SK-N-SH (cell line): ENCODE measurements at regions of chr1 and their contacts with region 1.

Region 1: DNA sequence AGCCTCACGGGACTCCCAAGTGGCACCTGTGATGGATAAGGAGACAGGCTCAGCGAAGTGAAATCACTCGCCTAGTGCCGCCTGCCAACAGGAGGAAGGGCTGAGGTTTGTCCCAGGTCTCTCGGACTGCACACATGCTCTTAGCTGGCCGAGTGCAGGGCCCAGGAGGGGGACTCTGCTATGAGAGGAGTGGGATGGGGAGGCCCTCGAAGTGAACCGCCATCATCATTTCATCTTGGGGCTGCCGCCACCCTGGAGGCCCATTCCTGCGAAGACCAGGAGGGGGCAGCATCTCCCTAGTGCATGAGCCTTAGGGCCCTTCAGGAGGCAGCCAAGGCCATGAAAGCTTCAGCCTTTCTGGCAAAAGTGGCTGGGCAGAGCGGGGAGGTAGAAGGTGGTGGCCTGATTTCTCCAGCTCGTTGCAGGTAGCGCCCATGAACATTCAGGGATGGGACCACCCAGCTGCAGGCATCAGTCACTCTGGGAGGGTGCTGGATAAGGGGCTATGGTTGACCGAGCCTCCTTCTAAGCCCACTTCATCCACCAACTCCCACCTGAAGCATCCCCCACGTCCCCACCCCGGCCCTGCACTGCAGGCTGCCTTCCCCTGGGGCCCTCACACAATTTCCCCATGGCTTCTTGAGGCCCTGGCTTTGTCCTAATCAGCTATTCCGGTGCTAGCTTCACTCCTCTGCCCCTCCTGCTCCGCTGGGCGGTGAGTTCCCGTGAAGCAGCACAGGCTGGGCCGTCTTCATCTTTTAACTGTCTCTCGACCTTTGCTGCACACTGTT is 17.2 kb upstream of the RASSF5 start:
- DNase-seq: peak; percentile 87
- H3K4me3 ChIP-seq: peak overlapping the region in 1 of 2 experiments; percentile 31; a peak in 1 of 4 replicates
- H3K27ac ChIP-seq: peak overlapping the region in 1 of 2 experiments; percentile 11; a peak in 1 of 4 replicates
- H3K4me1 ChIP-seq: peaks cover 3 to 20% of the 10 kb centered on the region in 2 experiments; a peak in 2 of 4 replicates
- H3K27me3 ChIP-seq: no peaks in the 10 kb centered on the region
- CTCF ChIP-seq: peak; percentile 96
- EP300 ChIP-seq: no peak
- RAD21 ChIP-seq: peak; percentile 94

Region 2: GRCh38 chr1:206143537-206144172 is 346.5 kb before region 1 on chr1:
- CTCF ChIA-PET with region 1: no interaction called
- POLR2A ChIA-PET with region 1: no interaction called
- DNase-seq: no peak
- H3K4me3 ChIP-seq: no peak overlapping the region
- H3K27ac ChIP-seq: no peak overlapping the region
- H3K4me1 ChIP-seq: no peaks in the 10 kb centered on the region
- H3K27me3 ChIP-seq: peaks cover 44% of the 10 kb centered on the region
- CTCF ChIP-seq: no peak
- EP300 ChIP-seq: no peak
- RAD21 ChIP-seq: no peak

Region 3: DNA sequence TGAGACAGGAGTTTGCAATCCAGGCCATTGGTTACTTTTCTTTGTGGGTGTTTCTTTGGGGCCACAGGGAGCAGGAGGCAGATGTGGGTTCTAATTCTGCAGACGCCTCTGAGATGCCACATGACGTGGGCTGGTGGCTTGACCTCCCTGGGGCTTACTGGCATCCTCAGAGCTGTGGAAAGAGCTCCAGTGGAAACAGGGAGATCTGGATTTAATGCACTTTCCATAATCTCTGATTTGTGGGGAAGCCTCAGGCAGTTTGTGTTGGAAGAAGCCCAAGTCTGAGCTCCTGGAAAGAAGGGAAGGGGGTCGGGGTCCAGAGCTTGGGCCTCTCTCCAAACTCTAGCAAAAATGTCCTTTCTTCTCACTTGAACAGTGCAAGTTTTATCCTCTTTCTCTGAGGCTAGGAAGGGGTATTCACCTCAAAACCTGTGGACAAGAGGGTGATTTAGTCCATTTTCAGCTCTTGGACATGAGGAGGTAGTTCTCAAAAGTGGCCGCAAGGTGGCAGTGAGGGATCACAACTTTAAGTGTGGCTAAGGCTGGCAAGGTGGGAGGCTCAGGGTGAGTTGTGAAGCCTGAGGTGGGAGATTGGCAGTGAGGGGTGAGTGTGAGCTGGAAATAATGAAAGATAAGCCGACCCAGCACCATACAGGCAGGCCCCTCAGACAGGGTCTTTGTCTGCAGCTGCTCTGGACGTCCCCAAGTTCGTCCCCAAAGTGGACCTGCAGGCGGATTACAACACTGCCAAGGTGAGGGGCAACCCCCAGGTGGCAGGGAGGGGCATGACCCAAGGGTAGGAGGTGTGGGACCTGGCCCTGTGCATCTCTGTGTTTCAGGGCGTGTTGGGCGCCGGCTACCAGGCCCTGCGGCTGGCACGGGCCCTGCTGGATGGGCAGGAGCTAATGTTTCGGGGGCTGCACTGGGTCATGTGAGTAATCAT is 10.7 kb before region 1 on chr1:
- CTCF ChIA-PET with region 1: interaction called, 103 read pairs
- POLR2A ChIA-PET with region 1: no interaction called
- DNase-seq: peak; percentile 89
- H3K4me3 ChIP-seq: no peak overlapping the region
- H3K27ac ChIP-seq: no peak overlapping the region
- H3K4me1 ChIP-seq: peaks cover 12% of the 10 kb centered on the region in 2 experiments; a peak in 3 of 4 replicates
- H3K27me3 ChIP-seq: no peaks in the 10 kb centered on the region
- CTCF ChIP-seq: peak; percentile 80
- EP300 ChIP-seq: no peak
- RAD21 ChIP-seq: peak; percentile 85

Region 4: GRCh38 chr1:206537141-206537540 is 47.0 kb after region 1 on chr1:
- CTCF ChIA-PET with region 1: interaction called, 18 read pairs
- POLR2A ChIA-PET with region 1: no interaction called
- DNase-seq: no peak
- H3K4me3 ChIP-seq: no peak overlapping the region
- H3K27ac ChIP-seq: no peak overlapping the region
- H3K4me1 ChIP-seq: peaks cover 0 to 11% of the 10 kb centered on the region in 2 experiments; a peak in 1 of 4 replicates
- H3K27me3 ChIP-seq: no peaks in the 10 kb centered on the region
- CTCF ChIP-seq: no peak
- EP300 ChIP-seq: no peak
- RAD21 ChIP-seq: no peak

Region 5: GRCh38 chr1:206556750-206557635 is 66.8 kb after region 1 on chr1:
- CTCF ChIA-PET with region 1: interaction called, 21 read pairs
- POLR2A ChIA-PET with region 1: no interaction called
- DNase-seq: peak; percentile 87
- H3K4me3 ChIP-seq: peak overlapping the region; percentile 61 to 69
- H3K27ac ChIP-seq: no peak overlapping the region
- H3K4me1 ChIP-seq: peaks cover 0 to 10% of the 10 kb centered on the region in 2 experiments; a peak in 2 of 4 replicates
- H3K27me3 ChIP-seq: no peaks in the 10 kb centered on the region; the same call in 1 of the 2 replicates
- CTCF ChIP-seq: no peak
- EP300 ChIP-seq: peak in 1 of 2 experiments; percentile 11; a peak in 1 of 4 replicates
- RAD21 ChIP-seq: no peak

Region 6: DNA sequence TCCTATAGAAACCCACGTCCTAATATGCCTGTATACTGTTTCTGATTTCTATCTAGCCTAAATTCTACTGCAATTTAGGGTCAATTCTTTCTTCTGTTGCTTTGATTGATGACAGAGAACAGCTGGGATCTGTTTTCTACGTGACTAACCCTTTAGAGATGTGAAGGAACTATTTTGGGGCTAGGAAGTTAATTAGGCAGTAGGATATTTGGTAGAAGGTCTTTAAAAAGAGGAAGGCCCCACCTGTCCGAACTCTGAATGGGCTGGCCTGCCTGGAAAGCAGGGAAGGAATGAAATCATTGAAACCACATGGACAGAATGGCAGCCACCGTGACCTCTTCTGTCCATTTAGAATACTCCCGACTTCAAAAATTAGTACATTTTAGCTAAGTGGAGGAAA is 101.1 kb after region 1 on chr1:
- CTCF ChIA-PET with region 1: interaction called, 231 read pairs
- POLR2A ChIA-PET with region 1: no interaction called
- DNase-seq: no peak
- H3K4me3 ChIP-seq: no peak overlapping the region
- H3K27ac ChIP-seq: no peak overlapping the region
- H3K4me1 ChIP-seq: peaks cover 5 to 25% of the 10 kb centered on the region in 2 experiments
- H3K27me3 ChIP-seq: no peaks in the 10 kb centered on the region
- CTCF ChIP-seq: no peak
- EP300 ChIP-seq: no peak
- RAD21 ChIP-seq: no peak

Region 7: GRCh38 chr1:206635080-206635977 is 145.2 kb after region 1 on chr1 and contains the start of gene DYRK3:
- CTCF ChIA-PET with region 1: interaction called, 12 read pairs
- POLR2A ChIA-PET with region 1: no interaction called
- DNase-seq: peak; percentile 97
- H3K4me3 ChIP-seq: peak within 1 kb of the TSS; percentile 87 to 92
- H3K27ac ChIP-seq: peak within 1 kb of the TSS; percentile 79 to 83
- H3K4me1 ChIP-seq: peaks cover 18 to 22% of the 10 kb centered on the region in 2 experiments; a peak in 3 of 4 replicates
- H3K27me3 ChIP-seq: no peaks in the 10 kb centered on the region
- CTCF ChIP-seq: no peak
- EP300 ChIP-seq: no peak; a peak in 1 of 4 replicates
- RAD21 ChIP-seq: no peak
- polyA plus RNA-seq, gene DYRK3: 3.6 and 5.8 TPM in 2 replicates